ENCODE measurements at regions of chr6 and their contacts with region 1.

Region 1: GRCh38 chr6:39166189-39166911 is 51.4 kb upstream of the SAYSD1 start:
- DNase-seq: peak; percentile 73 to 89 (median 86)
- H3K4me3 ChIP-seq: no peak overlapping the region
- H3K27ac ChIP-seq: no peak overlapping the region
- H3K4me1 ChIP-seq: peaks cover 0 to 6% (median 1%) of the 10 kb centered on the region in 4 experiments
- H3K27me3 ChIP-seq: peaks cover 0 to 13% (median 0%) of the 10 kb centered on the region in 5 experiments

Region 2: GRCh38 chr6:39177130-39177529 is 10.8 kb after region 1 on chr6:
- CTCF ChIA-PET with region 1: interaction called, 17 read pairs
- POLR2A ChIA-PET with region 1: no interaction called
- DNase-seq: no peak
- H3K4me3 ChIP-seq: no peak overlapping the region
- H3K27ac ChIP-seq: no peak overlapping the region
- H3K4me1 ChIP-seq: peaks cover 7 to 18% (median 11%) of the 10 kb centered on the region in 4 experiments
- H3K27me3 ChIP-seq: no peaks in the 10 kb centered on the region

Region 3: DNA sequence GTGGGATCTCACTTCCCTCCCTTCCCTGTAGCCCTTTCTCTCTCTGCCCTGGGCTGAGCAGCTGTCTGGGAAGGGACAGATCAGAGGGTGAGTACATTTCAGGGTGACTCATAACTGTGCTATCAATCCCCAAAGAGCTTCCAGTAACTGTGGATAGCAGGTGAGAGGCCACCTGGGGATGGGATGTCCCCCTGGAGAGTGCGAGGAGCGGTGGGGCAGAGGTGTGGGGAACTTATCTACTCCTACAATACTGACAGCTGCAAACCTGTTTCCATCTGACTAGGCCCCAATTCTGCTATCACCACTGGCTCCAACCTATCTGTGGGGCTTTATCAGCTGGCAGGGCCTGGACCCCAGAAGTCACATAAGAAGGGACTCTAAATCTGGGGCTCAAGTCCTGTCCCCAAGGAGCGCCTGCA is 30.3 kb after region 1 on chr6:
- CTCF ChIA-PET with region 1: interaction called, 14 read pairs
- POLR2A ChIA-PET with region 1: no interaction called
- DNase-seq: no peak
- H3K4me3 ChIP-seq: no peak overlapping the region
- H3K27ac ChIP-seq: no peak overlapping the region
- H3K4me1 ChIP-seq: peaks cover 0 to 14% (median 0%) of the 10 kb centered on the region in 4 experiments
- H3K27me3 ChIP-seq: no peaks in the 10 kb centered on the region

Measured in common myeloid progenitor, CD34-positive (primary cell).